OCI-LY7 (cell line): ENCODE measurements at regions of chr16 and their contacts with region 1.

Region 1: GRCh38 chr16:48441863-48442279 is 56.7 kb upstream of the SIAH1 start:
- DNase-seq: no peak
- H3K4me3 ChIP-seq: no peak overlapping the region
- H3K27ac ChIP-seq: no peak overlapping the region
- H3K4me1 ChIP-seq: no peaks in the 10 kb centered on the region
- CTCF ChIP-seq: no peak

Region 2: DNA sequence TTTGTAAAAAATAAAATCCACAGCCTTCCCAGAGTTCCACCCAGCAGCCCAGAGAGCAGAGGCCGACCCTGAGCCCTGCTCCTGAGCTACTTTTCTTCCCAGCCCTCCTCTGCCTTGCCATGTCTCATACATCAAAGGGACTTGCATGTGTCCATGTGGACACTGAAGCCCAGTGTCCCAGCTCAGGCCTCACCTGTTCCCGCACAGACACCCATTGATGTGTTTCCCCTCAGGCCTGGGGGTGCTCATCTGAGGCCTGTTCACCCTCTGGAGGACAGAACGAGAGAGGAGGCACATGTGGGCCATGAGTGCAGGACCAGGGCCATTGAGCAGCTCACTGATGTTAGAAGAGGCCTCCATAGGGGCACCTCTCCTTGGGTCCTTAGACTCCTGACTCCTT is 43.1 kb before region 1 on chr16:
- CTCF ChIA-PET with region 1: no interaction called
- POLR2A ChIA-PET with region 1: no interaction called
- intact Hi-C with region 1: loop called (anchors 1 kb)
- DNase-seq: no peak
- H3K4me3 ChIP-seq: no peak overlapping the region
- H3K27ac ChIP-seq: no peak overlapping the region
- H3K4me1 ChIP-seq: no peaks in the 10 kb centered on the region
- CTCF ChIP-seq: no peak